ENCODE measurements at regions of chr14 and their contacts with region 1.

Region 1: GRCh38 chr14:37985826-37986470 is 221.8 kb upstream of the SSTR1 start:
- DNase-seq: no peak
- H3K4me3 ChIP-seq: no peak overlapping the region
- H3K27ac ChIP-seq: no peak overlapping the region
- H3K4me1 ChIP-seq: no peaks in the 10 kb centered on the region
- H3K27me3 ChIP-seq: no peaks in the 10 kb centered on the region
- CTCF ChIP-seq: peak in 3 of 4 experiments; percentile 38 to 56 (median 49)
- POLR2A ChIP-seq: no peak

Region 2: GRCh38 chr14:37864861-37865718 is 120.9 kb before region 1 on chr14:
- intact Hi-C with region 1: no loop called
- DNase-seq: peak; percentile 72
- H3K4me3 ChIP-seq: peak overlapping the region in 1 of 2 donors; percentile 6
- H3K27ac ChIP-seq: peak overlapping the region; percentile 10 to 41
- H3K4me1 ChIP-seq: peaks cover 4% of the 10 kb centered on the region
- H3K27me3 ChIP-seq: no peaks in the 10 kb centered on the region
- CTCF ChIP-seq: no peak
- POLR2A ChIP-seq: no peak

Region 3: DNA sequence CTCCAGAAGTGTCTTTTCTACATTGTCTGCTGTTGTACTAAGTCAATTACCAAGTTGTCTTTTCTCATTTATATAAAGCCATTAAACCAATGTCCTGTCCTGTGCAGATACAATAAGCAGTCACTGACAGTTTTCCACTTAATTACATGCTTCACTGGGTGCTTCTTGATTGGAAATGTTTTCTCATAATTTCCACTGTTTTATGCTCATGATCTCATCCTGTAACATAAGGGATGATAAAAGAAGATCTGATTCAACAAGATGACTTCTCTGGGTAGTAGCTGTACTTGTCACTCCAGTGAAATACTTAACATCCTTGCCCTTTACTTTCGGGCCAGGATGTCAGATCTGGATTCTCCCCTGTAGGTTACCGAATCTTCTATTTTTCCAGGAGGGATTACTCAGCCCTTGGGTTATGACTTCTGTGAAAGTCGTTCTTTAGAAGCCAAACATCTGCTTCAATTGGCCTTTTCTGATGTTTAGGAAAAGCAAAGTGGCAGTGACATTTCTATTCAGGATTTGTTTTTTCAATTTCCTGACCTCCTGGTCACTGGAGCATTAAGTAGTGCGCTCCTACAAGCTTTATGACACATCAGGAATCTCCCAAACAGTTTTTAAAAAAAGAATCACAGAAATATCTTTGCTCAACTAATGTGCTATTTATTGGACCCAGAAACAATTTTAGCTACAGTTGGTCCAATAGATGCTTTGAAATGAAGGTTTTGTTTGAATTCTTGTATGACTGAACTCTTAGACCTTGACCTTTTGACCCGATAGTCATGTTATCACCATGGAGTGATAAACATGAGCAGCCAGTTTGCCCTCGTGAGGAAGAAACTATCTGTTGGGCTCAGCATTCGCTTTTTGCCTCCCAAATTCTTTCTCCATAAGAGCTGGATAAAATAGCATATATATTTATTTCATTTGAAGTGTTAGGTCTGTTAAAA is 12.7 kb before region 1 on chr14:
- intact Hi-C with region 1: no loop called
- DNase-seq: no peak
- H3K4me3 ChIP-seq: no peak overlapping the region
- H3K27ac ChIP-seq: no peak overlapping the region
- H3K4me1 ChIP-seq: no peaks in the 10 kb centered on the region
- H3K27me3 ChIP-seq: no peaks in the 10 kb centered on the region
- CTCF ChIP-seq: no peak
- POLR2A ChIP-seq: no peak

Region 4: GRCh38 chr14:38197001-38197783 is 211.2 kb after region 1 on chr14:
- intact Hi-C with region 1: loop called (anchors 10 kb)
- DNase-seq: no peak
- H3K4me3 ChIP-seq: no peak overlapping the region
- H3K27ac ChIP-seq: no peak overlapping the region
- H3K4me1 ChIP-seq: no peaks in the 10 kb centered on the region
- H3K27me3 ChIP-seq: peaks cover 3% of the 10 kb centered on the region
- CTCF ChIP-seq: peak; percentile 12 to 46 (median 44)
- POLR2A ChIP-seq: no peak